ENCODE measurements at regions of chr2 and their contacts with region 1.

Region 1: GRCh38 chr2:186641807-186642321 is 52.0 kb upstream of the FAM171B start:
- DNase-seq: peak; percentile 43
- H3K4me3 Mint-ChIP-seq: no peak overlapping the region
- H3K27ac Mint-ChIP-seq: no peak overlapping the region
- H3K4me1 Mint-ChIP-seq: peaks cover 21% of the 10 kb centered on the region
- H3K27me3 Mint-ChIP-seq: no peaks in the 10 kb centered on the region

Region 2: DNA sequence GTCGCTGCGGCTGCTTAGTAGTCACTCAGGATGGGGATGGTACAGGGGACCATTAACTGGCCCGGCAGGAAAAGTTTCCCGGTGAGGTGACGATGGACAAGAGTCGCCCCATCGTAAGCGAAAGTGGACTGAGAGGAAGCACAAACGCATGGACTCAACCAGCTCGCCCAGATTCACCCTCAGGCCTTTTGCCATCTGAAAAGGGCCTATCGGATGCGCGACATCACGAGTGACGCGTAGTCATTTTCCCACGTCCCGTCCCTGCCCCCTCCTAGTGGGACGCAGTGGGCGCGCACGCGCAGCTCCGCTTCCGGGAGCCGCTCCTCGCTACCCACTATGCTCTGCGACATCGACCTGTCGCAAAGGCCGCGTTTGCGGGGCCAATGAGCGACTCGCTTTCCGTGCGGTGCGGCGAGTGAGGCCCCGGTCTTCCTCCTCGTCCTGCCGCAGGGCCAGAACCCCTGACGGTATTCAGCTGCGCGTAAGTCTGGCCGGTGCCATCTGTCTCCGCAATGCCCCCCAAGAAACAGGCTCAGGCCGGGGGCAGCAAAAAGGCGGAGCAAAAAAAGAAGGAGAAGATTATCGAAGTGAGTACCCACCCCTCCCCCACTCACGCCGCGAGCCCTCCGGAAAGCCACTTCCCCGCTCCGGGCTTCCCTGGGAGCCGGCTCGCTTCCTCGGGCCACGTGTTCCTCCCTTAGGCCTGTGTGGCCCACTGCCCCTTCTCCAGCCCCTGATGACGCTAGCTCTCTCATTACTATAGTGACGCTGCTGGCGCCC is 155.8 kb before region 1 on chr2 and contains the start of gene ZC3H15:
- CTCF ChIA-PET with region 1: interaction called, 7 read pairs
- POLR2A ChIA-PET with region 1: interaction called, 9 read pairs
- intact Hi-C with region 1: loop called (anchors 1 kb)
- DNase-seq: peak; percentile 98
- H3K4me3 Mint-ChIP-seq: peak within 1 kb of the TSS; percentile 97
- H3K27ac Mint-ChIP-seq: peak within 1 kb of the TSS; percentile 96
- H3K4me1 Mint-ChIP-seq: peaks cover 60% of the 10 kb centered on the region
- H3K27me3 Mint-ChIP-seq: no peaks in the 10 kb centered on the region
- total RNA-seq, gene ZC3H15: 82.5 to 87.1 TPM

Region 3: GRCh38 chr2:186503848-186504606 is 137.8 kb before region 1 on chr2:
- CTCF ChIA-PET with region 1: interaction called, 95 read pairs
- POLR2A ChIA-PET with region 1: no interaction called
- intact Hi-C with region 1: loop called (anchors 1 kb)
- DNase-seq: no peak
- H3K4me3 Mint-ChIP-seq: no peak overlapping the region
- H3K27ac Mint-ChIP-seq: no peak overlapping the region
- H3K4me1 Mint-ChIP-seq: peaks cover 7% of the 10 kb centered on the region
- H3K27me3 Mint-ChIP-seq: no peaks in the 10 kb centered on the region

Region 4: DNA sequence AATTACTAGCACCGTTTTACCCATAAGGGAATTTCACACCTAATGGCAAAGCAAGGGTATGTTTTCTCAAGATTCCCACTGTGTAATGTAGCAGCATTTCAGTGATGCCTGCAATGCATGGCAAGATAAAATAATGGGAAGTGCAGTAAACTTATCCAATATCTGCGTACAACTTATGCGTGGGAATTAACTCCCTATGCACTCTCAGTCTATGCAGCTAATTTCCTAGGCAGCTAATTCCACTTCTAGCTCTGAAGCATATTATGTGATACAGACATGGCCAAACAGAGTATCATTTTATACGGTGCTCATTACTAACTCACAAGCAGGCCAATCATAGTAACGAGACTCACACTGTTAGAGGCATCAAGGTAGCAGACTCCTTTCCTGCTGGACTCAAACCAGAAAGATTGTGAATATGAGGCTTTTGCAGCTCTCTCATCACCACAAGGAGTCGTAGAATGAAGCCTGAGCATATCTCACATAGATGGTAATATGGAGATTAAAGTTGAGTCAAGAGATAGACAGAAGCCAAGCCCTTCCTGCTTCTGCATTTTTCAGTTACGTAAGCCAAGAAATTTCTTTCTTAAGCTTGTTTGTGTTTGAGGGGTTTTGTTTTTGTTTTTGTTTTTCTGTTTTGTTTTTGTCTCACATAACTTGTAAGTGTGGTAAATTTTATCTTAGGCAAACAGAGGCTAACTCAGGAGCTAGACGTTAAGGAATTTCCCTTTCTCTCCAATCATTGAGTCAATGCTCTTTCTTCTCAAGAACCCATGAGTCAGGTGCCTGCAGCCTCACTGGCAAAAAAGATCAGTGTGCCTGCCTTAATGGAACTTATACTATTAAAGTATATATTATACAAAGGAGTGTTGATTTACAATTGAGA is 86.8 kb before region 1 on chr2:
- CTCF ChIA-PET with region 1: interaction called, 3 read pairs
- POLR2A ChIA-PET with region 1: no interaction called
- intact Hi-C with region 1: loop called (anchors 1 kb)
- DNase-seq: no peak
- H3K4me3 Mint-ChIP-seq: no peak overlapping the region
- H3K27ac Mint-ChIP-seq: no peak overlapping the region
- H3K4me1 Mint-ChIP-seq: no peaks in the 10 kb centered on the region
- H3K27me3 Mint-ChIP-seq: no peaks in the 10 kb centered on the region

Region 5: GRCh38 chr2:186589612-186590349 is 52.1 kb before region 1 on chr2 and contains the start of gene ITGAV:
- CTCF ChIA-PET with region 1: interaction called, 12 read pairs
- POLR2A ChIA-PET with region 1: interaction called, 12 read pairs
- intact Hi-C with region 1: loop called (anchors 1 kb)
- DNase-seq: peak; percentile 91
- H3K4me3 Mint-ChIP-seq: peak within 1 kb of the TSS; percentile 76
- H3K27ac Mint-ChIP-seq: peak within 1 kb of the TSS; percentile 80
- H3K4me1 Mint-ChIP-seq: peaks cover 35% of the 10 kb centered on the region
- H3K27me3 Mint-ChIP-seq: peaks cover 3% of the 10 kb centered on the region
- total RNA-seq, gene ITGAV: 8.9 to 9.9 TPM

Region 6: DNA sequence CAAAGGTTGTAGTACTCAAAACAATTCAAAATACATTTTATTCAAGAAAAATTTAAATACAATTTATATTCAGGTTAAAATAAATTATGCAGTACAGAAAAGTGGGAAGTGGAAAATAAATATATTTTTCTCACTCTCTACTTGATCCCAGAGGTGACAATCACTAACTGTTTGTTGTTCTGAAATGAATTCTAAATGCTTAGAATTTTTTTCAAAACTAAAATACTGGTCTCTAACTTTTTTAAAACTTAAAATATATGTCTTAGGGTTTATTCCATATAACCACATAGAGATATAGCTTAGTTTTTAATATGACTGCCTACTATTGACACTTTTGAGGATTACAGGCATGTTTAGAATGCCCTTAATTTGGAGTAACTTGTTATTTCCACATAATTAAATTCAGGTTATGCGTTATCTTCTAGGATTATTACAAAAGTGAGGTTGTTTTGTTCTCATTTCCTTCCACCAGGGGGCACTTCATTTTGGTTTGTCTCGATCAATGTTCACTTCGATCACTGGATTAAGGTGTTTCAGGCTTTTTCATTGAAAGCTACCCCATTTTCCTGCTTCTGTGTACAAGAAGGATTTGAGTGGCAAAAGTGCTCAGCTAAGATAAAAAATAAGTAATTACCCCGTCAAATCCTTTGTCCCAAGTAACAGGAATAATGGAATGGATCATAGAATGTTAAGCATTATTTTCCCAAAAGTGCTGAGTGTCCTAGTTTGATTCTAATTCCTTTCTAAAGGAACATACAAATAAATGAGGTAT is 939.4 kb after region 1 on chr2:
- CTCF ChIA-PET with region 1: no interaction called
- POLR2A ChIA-PET with region 1: no interaction called
- intact Hi-C with region 1: loop called (anchors 5 kb)
- DNase-seq: no peak
- H3K4me3 Mint-ChIP-seq: no peak overlapping the region
- H3K27ac Mint-ChIP-seq: no peak overlapping the region
- H3K4me1 Mint-ChIP-seq: peaks cover 6% of the 10 kb centered on the region
- H3K27me3 Mint-ChIP-seq: peaks cover 1% of the 10 kb centered on the region

Measured in activated CD4-positive, alpha-beta memory T cell treated with anti-CD3 and anti-CD28 coated beads for 36 hours (primary cell).